ENCODE measurements at regions of chr7 and their contacts with region 1.

Region 1: GRCh38 chr7:30983042-30983913 is 19.5 kb downstream of the GHRHR start:
- DNase-seq: peak; percentile 93
- H3K4me3 Mint-ChIP-seq: no peak overlapping the region
- H3K27ac Mint-ChIP-seq: no peak overlapping the region
- H3K4me1 Mint-ChIP-seq: peaks cover 6% of the 10 kb centered on the region
- H3K27me3 Mint-ChIP-seq: peaks cover 29% of the 10 kb centered on the region

Region 2: GRCh38 chr7:29636009-29636351 is 1347.3 kb before region 1 on chr7:
- intact Hi-C with region 1: no loop called
- DNase-seq: no peak
- H3K4me3 Mint-ChIP-seq: no peak overlapping the region
- H3K27ac Mint-ChIP-seq: no peak overlapping the region
- H3K4me1 Mint-ChIP-seq: no peaks in the 10 kb centered on the region
- H3K27me3 Mint-ChIP-seq: no peaks in the 10 kb centered on the region

Region 3: GRCh38 chr7:30954914-30955313 is 28.4 kb before region 1 on chr7:
- intact Hi-C with region 1: no loop called
- DNase-seq: peak; percentile 24
- H3K4me3 Mint-ChIP-seq: no peak overlapping the region
- H3K27ac Mint-ChIP-seq: no peak overlapping the region
- H3K4me1 Mint-ChIP-seq: no peaks in the 10 kb centered on the region
- H3K27me3 Mint-ChIP-seq: peaks cover 19% of the 10 kb centered on the region

Region 4: GRCh38 chr7:31122649-31123058 is 139.4 kb after region 1 on chr7:
- intact Hi-C with region 1: loop called (anchors 1 kb)
- DNase-seq: peak; percentile 81
- H3K4me3 Mint-ChIP-seq: no peak overlapping the region
- H3K27ac Mint-ChIP-seq: no peak overlapping the region
- H3K4me1 Mint-ChIP-seq: no peaks in the 10 kb centered on the region
- H3K27me3 Mint-ChIP-seq: peaks cover 13% of the 10 kb centered on the region

Measured in activated CD4-positive, alpha-beta T cell treated with anti-CD3 and anti-CD28 coated beads, Interleukin-2, amount 10 ng/mL, durations not matched to agents 24 days and 14 days (primary cell).